Heart right ventricle (tissue), 16 donors: ENCODE measurements at regions of chr1 and their contacts with region 1.

Region 1: GRCh38 chr1:181142096-181142958 is 53.8 kb downstream of the IER5 start:
- DNase-seq: peak; percentile 88 to 91
- ATAC-seq: peak; percentile 94 to 97 (median 96)
- H3K4me3 ChIP-seq: peak overlapping the region in 7 of 10 donors; percentile 1 to 50 (median 39)
- H3K27ac ChIP-seq: peak overlapping the region in 3 of 10 donors; percentile 31 to 68 (median 39)
- H3K4me1 ChIP-seq: peaks cover 16 to 49% (median 39%) of the 10 kb centered on the region in 9 donors
- H3K27me3 ChIP-seq: no peaks in the 10 kb centered on the region
- CTCF ChIP-seq: peak; percentile 91 to 99 (median 98)

Region 2: DNA sequence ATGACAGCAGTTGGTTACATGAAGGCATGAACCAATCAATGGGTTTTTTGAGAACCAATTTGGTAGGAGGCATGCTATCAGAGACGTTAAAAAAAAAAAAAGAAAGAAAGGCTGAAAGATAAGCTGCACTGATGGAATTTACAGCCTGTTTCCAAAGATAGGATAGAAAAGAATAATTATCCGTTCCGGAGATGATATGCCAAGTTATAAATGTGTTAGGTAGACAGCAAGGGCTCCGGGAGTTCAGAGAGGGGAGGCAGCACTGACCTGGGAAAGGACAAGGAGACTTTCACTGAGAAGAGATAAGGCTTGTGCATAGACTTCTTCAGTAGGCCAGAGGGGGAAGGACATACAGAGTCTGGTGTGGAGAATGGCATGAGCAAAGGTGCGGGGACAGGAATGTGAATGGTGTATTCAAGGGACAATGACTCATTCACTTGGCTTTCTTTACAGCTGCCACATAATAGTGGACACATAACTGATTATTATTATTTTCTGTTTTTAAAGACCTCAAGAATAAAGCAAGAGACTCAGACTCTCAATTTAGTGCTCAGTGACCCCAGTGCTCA is 615.1 kb before region 1 on chr1:
- intact Hi-C with region 1: loop called in 1 of 10 experiments (anchors 10 kb)
- DNase-seq: no peak
- ATAC-seq: peak in 4 of 8 donors; percentile 27 to 41 (median 36)
- H3K4me3 ChIP-seq: no peak overlapping the region
- H3K27ac ChIP-seq: peak overlapping the region in 1 of 10 donors; percentile 22
- H3K4me1 ChIP-seq: peaks cover 0 to 57% (median 21%) of the 10 kb centered on the region in 9 donors
- H3K27me3 ChIP-seq: no peaks in the 10 kb centered on the region
- CTCF ChIP-seq: no peak

Region 3: GRCh38 chr1:181021811-181022434 is 120.4 kb before region 1 on chr1:
- intact Hi-C with region 1: loop called in 1 of 10 experiments (anchors 5 kb)
- DNase-seq: peak; percentile 62 to 72
- ATAC-seq: peak; percentile 53 to 78 (median 68)
- H3K4me3 ChIP-seq: peak overlapping the region; percentile 61 to 100 (median 86)
- H3K27ac ChIP-seq: peak overlapping the region; percentile 56 to 96 (median 90)
- H3K4me1 ChIP-seq: peaks cover 2 to 40% (median 28%) of the 10 kb centered on the region in 9 donors
- H3K27me3 ChIP-seq: no peaks in the 10 kb centered on the region
- CTCF ChIP-seq: no peak

Region 4: GRCh38 chr1:181044449-181044966 is 97.8 kb before region 1 on chr1:
- intact Hi-C with region 1: loop called in 6 of 10 experiments (anchors 2 to 5 kb)
- DNase-seq: no peak
- ATAC-seq: peak in 3 of 8 donors; percentile 37 to 55 (median 50)
- H3K4me3 ChIP-seq: no peak overlapping the region
- H3K27ac ChIP-seq: peak overlapping the region in 1 of 10 donors; percentile 36
- H3K4me1 ChIP-seq: peaks cover 0 to 42% (median 3%) of the 10 kb centered on the region in 9 donors
- H3K27me3 ChIP-seq: no peaks in the 10 kb centered on the region
- CTCF ChIP-seq: no peak

Region 5: DNA sequence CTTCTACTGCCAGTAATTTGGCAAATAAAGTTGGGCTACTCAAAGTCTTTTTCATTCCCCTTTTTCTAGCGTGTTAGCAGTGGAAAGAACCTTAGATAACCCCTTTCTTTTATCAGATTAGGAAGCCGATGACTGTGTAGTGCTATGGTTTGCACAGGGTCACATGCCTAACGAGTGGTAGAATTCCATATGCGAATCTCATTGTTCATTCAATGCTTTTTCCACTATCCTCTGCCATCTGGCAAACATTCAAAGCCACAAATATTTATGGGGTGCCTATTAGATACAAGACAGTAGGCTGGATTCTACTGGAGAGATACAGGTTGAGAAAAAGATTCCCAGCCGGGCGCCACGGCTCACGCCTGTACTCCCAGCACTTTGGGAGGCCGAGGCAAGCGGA is 68.7 kb before region 1 on chr1:
- intact Hi-C with region 1: no loop called
- DNase-seq: no peak
- ATAC-seq: peak in 1 of 8 donors; percentile 42
- H3K4me3 ChIP-seq: no peak overlapping the region
- H3K27ac ChIP-seq: no peak overlapping the region
- H3K4me1 ChIP-seq: peaks cover 0 to 13% (median 5%) of the 10 kb centered on the region in 9 donors
- H3K27me3 ChIP-seq: no peaks in the 10 kb centered on the region
- CTCF ChIP-seq: no peak

Region 6: DNA sequence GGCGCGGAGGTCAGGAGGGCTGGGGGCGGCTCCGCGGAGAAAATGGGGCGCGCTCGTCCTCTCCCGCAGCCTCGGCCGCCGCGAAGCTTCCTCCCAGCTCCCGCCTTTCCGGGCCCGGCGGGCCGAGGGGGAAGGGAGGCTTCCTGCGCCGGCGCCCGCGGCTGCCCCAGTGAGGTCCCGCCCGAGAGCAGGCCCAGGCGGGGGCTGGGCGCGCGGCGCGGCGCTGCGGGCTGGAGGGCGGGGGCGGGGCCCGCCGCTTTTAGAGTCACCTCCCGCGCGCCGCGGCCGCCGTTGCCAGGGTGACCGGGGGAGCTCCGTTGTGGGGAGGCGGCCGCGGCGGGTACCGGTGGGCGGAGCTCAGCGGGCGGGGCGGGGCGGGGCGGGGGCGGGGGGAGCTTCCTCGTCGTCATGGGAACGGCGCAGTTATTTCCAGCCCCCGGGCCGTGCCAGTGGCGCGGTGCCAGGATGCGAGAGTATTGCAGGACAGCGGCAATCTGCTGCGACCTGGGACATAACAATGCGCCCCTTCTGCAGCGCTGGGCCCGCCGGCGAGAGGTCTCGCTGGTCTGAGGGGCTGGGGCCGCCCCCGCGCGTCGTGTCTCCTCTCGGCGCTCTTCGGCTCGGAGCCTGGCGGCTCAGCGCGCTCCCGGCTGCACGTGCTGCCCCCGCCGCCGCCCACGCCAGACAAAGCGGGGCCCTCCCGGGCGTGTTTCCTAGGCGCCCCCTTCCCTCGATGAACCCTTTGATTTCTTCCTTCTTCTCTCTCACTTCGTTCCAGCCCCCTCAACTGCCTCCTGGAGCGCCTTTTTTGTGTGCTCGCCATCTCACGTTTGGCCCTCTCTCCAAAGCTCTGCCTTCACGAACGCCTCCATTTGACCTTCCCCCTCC is 36.9 kb before region 1 on chr1:
- intact Hi-C with region 1: loop called in 1 of 10 experiments (anchors 5 kb)
- DNase-seq: peak; percentile 94 to 98
- ATAC-seq: peak; percentile 93 to 97 (median 94)
- H3K4me3 ChIP-seq: peak overlapping the region; percentile 69 to 93 (median 86)
- H3K27ac ChIP-seq: peak overlapping the region; percentile 80 to 97 (median 92)
- H3K4me1 ChIP-seq: peaks cover 3 to 73% (median 46%) of the 10 kb centered on the region in 9 donors
- H3K27me3 ChIP-seq: no peaks in the 10 kb centered on the region
- CTCF ChIP-seq: no peak